Gastrocnemius medialis (tissue), 4 donors: ENCODE measurements at regions of chr17 and their contacts with region 1.

Region 1: DNA sequence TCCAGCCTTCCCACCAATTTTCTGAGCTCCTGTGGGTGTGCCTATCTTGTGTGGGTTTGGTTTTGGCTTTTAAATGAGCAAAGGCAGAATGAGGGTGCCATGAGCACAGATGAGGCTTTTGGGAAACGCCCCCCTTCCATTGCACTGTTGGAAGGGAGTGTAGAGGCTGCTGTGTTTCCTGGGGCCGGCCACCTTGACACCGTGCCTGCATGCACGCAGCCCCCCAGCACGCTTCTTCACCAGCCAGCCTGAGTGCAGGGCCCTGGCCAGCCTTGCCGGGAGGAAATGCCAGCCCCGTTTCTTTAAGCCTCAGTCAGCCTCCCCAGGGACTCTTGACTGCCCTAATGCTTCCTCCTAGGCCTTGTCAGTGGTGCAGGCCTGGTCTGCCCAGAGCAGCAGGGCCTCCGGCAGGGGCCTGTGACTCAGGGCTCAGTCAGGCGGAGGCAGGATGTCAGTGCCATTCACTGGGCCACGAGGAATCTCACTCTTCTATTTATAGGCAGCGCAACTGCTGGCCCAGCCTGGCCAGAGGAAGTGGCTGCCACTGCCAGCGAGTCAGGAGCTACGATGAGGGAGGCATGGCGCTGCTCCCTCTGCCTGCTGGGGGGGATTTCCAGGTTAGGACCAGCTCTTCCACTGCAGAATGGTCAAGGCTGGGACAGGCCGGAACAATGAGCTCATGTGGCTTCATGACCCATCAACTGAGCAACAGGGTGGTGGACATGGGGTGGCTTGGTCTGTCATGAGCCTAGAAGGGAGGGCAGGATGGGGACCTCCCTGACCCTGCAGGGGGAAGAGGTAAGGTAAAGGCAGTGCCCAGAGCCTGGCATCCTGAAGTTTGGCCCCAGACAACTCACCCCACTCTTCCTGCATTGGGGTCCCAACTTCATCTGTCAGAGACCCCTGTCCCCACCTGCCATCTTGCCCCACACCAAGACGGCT is 205.2 kb downstream of the RAB11FIP4 start:
- DNase-seq: peak; percentile 89 to 94
- ATAC-seq: peak; percentile 89 to 91
- H3K4me3 ChIP-seq: no peak overlapping the region
- H3K27ac ChIP-seq: peak overlapping the region; percentile 88 to 96 (median 90)
- H3K4me1 ChIP-seq: peaks cover 17 to 29% of the 10 kb centered on the region in 2 donors
- H3K27me3 ChIP-seq: no peaks in the 10 kb centered on the region
- CTCF ChIP-seq: peak in 2 of 5 experiments; percentile 24 to 33
- POLR2A ChIP-seq: peak; percentile 23 to 35

Region 2: GRCh38 chr17:31558748-31559644 is 37.7 kb before region 1 on chr17:
- in situ Hi-C with region 1: no loop called
- intact Hi-C with region 1: loop called (anchors 1 kb)
- DNase-seq: peak; percentile 59 to 70
- ATAC-seq: peak; percentile 93
- H3K4me3 ChIP-seq: peak overlapping the region; percentile 56 to 76 (median 68)
- H3K27ac ChIP-seq: peak overlapping the region; percentile 55 to 86 (median 78)
- H3K4me1 ChIP-seq: peaks cover 0 to 6% of the 10 kb centered on the region in 2 donors
- H3K27me3 ChIP-seq: peaks cover 0 to 6% (median 0%) of the 10 kb centered on the region in 3 donors
- CTCF ChIP-seq: peak; percentile 72 to 99 (median 94)
- POLR2A ChIP-seq: peak; percentile 48 to 60